ENCODE measurements at regions of chr22 and their contacts with region 1.

Region 1: DNA sequence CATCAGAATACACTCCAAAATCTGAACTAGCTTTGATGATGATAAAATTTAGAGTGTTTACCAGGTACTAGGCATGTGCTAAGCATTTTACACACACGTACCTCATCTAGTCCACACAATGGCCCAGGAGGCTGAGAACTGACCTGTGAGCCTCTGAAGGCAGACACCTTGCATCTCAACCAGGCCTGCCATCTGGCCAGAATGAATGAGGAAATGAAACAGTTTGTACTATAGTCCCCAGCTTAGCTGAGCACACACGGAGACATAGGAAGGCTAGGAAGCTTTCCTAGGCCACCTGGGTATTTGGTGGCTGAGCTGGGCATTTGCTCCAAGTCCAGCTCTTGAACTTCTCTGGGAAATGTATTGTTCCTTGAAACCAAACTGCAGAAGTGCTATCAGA is 6.9 kb upstream of the SHANK3 start:
- DNase-seq: peak; percentile 73

Region 2: GRCh38 chr22:50630376-50630775 is 35.4 kb before region 1 on chr22:
- in situ Hi-C with region 1: loop called (anchors 5 kb)
- DNase-seq: peak; percentile 77